ENCODE measurements at regions of chr19 and their contacts with region 1.

Region 1: GRCh38 chr19:9586764-9587163 is 2.5 kb upstream of the ZNF121 start:
- DNase-seq: peak; percentile 63 to 91
- H3K4me3 ChIP-seq: no peak overlapping the region
- CTCF ChIP-seq: no peak
- POLR2A ChIP-seq: no peak

Region 2: GRCh38 chr19:9467161-9467560 is 119.6 kb before region 1 on chr19:
- intact Hi-C with region 1: no loop called
- DNase-seq: no peak
- H3K4me3 ChIP-seq: no peak overlapping the region
- CTCF ChIP-seq: no peak
- POLR2A ChIP-seq: no peak

Region 3: GRCh38 chr19:9566729-9567128 is 20.0 kb before region 1 on chr19:
- intact Hi-C with region 1: loop called (anchors 1 kb)
- DNase-seq: no peak
- H3K4me3 ChIP-seq: no peak overlapping the region
- CTCF ChIP-seq: no peak
- POLR2A ChIP-seq: no peak

Region 4: GRCh38 chr19:9627856-9628255 is 41.1 kb after region 1 on chr19:
- intact Hi-C with region 1: loop called (anchors 5 kb)
- DNase-seq: no peak
- H3K4me3 ChIP-seq: no peak overlapping the region
- CTCF ChIP-seq: no peak
- POLR2A ChIP-seq: no peak

Region 5: DNA sequence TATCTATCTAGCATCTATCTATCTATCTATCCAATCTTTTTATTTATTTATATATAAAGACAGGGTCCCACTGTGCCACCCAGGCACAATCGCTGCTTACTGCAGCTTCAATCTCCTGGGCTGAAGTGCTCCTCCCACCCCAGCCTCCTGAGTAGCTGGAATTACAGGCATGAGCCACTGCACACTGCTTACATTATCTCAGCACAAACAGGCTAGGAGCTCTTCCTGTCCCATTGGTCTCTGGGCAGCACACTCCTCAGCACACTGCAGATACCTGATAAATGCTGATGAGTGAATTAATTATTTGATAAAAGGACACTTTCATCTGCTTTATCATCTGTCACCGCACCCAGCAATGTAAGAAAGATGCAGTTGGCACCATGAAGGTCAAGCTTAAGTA is 72.0 kb after region 1 on chr19:
- intact Hi-C with region 1: no loop called
- DNase-seq: peak in 1 of 2 donors; percentile 8
- H3K4me3 ChIP-seq: no peak overlapping the region
- CTCF ChIP-seq: no peak
- POLR2A ChIP-seq: no peak

Region 6: GRCh38 chr19:9801976-9802375 is 215.2 kb after region 1 on chr19:
- intact Hi-C with region 1: no loop called
- DNase-seq: no peak
- H3K4me3 ChIP-seq: no peak overlapping the region
- CTCF ChIP-seq: no peak
- POLR2A ChIP-seq: no peak

Region 7: GRCh38 chr19:11261941-11262839 is 1675.4 kb after region 1 on chr19 and contains the start of gene DOCK6:
- intact Hi-C with region 1: no loop called
- DNase-seq: no peak
- H3K4me3 ChIP-seq: peak within 1 kb of the TSS; percentile 82
- CTCF ChIP-seq: no peak
- POLR2A ChIP-seq: no peak
- total RNA-seq, gene DOCK6: 63.4 to 102 (median 65.6) TPM